Heart left ventricle (tissue), 16 donors: ENCODE measurements at regions of chr6 and their contacts with region 1.

Region 1: DNA sequence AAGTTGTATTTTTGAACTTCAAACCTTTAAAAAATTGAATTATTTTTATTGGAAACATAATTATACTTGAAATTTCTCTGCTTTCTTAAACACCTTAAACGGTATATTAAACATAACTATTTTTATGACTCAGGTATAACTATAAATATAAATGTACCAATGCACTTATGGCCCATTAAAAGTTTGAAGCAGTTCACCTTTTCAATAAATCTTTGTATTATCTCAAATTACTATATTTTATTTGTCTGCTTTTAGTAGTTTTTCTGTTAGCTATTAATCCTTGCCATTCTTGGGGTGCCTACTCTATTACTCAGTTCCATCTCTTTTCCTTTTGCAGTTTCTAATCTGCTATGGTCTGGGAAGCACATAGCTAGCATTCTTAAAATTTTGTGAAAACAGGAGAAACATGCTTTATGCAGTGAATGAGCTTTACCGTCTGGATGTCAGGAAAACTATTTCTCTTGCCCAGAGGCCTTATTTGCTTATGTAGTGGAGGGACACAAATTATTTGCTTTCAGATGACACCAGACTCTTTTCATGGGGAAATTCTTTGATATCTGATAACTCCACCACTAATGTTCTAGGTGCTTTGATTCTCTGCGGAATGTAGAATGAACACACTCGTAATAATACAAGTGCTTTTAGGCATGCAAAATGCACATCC is 378.9 kb upstream of the CITED2 start:
- DNase-seq: no peak
- ATAC-seq: no peak
- H3K4me3 ChIP-seq: no peak overlapping the region
- H3K27ac ChIP-seq: no peak overlapping the region
- H3K4me1 ChIP-seq: peaks cover 0 to 24% (median 16%) of the 10 kb centered on the region in 12 donors
- H3K27me3 ChIP-seq: no peaks in the 10 kb centered on the region
- CTCF ChIP-seq: no peak
- POLR2A ChIP-seq: no peak

Region 2: GRCh38 chr6:139355172-139355571 is 398.2 kb before region 1 on chr6:
- intact Hi-C with region 1: no loop called
- DNase-seq: no peak
- ATAC-seq: no peak
- H3K4me3 ChIP-seq: no peak overlapping the region
- H3K27ac ChIP-seq: no peak overlapping the region
- H3K4me1 ChIP-seq: peaks cover 0 to 10% (median 1%) of the 10 kb centered on the region in 12 donors
- H3K27me3 ChIP-seq: no peaks in the 10 kb centered on the region
- CTCF ChIP-seq: no peak
- POLR2A ChIP-seq: no peak

Region 3: GRCh38 chr6:139515511-139515910 is 237.8 kb before region 1 on chr6:
- intact Hi-C with region 1: loop called in 1 of 10 experiments (anchors 10 kb)
- DNase-seq: no peak
- ATAC-seq: no peak
- H3K4me3 ChIP-seq: no peak overlapping the region
- H3K27ac ChIP-seq: no peak overlapping the region
- H3K4me1 ChIP-seq: peaks cover 0 to 15% (median 7%) of the 10 kb centered on the region in 12 donors
- H3K27me3 ChIP-seq: no peaks in the 10 kb centered on the region
- CTCF ChIP-seq: no peak
- POLR2A ChIP-seq: no peak